ENCODE measurements at regions of chr16 and their contacts with region 1.

Region 1: DNA sequence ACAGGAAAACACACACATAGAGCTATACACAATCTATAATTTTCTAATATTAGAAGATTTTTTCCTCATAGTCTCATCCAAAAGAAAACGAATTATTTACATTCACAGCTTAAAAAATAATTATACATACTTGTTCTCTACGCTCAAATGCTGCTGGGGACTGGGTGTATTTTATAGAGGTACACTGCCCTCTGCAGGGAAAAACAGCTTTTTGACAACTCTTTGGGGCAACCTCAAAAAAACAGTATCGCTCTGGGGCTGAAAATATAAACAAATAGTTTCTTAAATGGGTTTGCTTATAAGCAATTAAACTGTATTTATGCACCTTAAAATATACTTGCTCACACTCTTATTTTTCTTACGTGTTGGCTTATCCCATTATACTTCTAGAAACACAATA is 261.8 kb upstream of the PSMD7 start:
- DNase-seq: no peak
- H3K4me3 ChIP-seq: no peak overlapping the region
- H3K27ac ChIP-seq: no peak overlapping the region
- H3K4me1 ChIP-seq: peaks cover 12 to 15% (median 14%) of the 10 kb centered on the region in 4 experiments; a peak in 6 of 7 replicates
- H3K27me3 ChIP-seq: no peaks in the 10 kb centered on the region
- CTCF ChIP-seq: peak in 2 of 3 experiments; percentile 48 to 56; a peak in 3 of 4 replicates
- EP300 ChIP-seq: no peak
- POLR2A ChIP-seq: no peak
- RAD21 ChIP-seq: peak; percentile 74 to 76

Region 2: DNA sequence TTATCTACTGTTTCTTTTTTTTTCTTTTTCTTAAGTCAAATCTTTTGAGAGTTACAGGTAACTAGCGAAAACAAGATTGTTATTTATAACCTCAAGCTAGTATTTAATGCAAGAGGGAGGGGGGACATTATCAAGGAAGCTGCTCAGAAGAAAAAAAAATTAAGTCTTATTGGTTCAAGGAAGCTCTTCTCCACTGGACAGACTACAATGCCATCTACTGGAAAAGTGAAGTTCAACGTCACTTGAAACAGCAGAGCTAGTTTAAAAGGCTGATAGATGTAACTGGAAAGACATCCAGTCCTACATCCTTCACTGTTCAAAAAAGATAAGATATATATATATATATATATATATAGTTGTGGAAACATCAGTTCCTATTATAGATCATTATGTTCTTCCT is 156.3 kb before region 1 on chr16:
- CTCF ChIA-PET with region 1: interaction called, 12 read pairs
- POLR2A ChIA-PET with region 1: no interaction called
- DNase-seq: no peak
- H3K4me3 ChIP-seq: no peak overlapping the region
- H3K27ac ChIP-seq: no peak overlapping the region
- H3K4me1 ChIP-seq: peaks cover 0 to 4% (median 1%) of the 10 kb centered on the region in 4 experiments; a peak in 3 of 7 replicates
- H3K27me3 ChIP-seq: no peaks in the 10 kb centered on the region
- CTCF ChIP-seq: peak in 2 of 3 experiments; percentile 31 to 56; a peak in 2 of 4 replicates
- EP300 ChIP-seq: no peak
- POLR2A ChIP-seq: no peak
- RAD21 ChIP-seq: peak; percentile 82 to 87

Region 3: GRCh38 chr16:73996624-73997339 is 38.1 kb before region 1 on chr16:
- CTCF ChIA-PET with region 1: interaction called, 11 read pairs
- POLR2A ChIA-PET with region 1: no interaction called
- DNase-seq: no peak
- H3K4me3 ChIP-seq: no peak overlapping the region
- H3K27ac ChIP-seq: no peak overlapping the region
- H3K4me1 ChIP-seq: no peaks in the 10 kb centered on the region
- H3K27me3 ChIP-seq: no peaks in the 10 kb centered on the region
- CTCF ChIP-seq: no peak
- EP300 ChIP-seq: no peak
- POLR2A ChIP-seq: no peak
- RAD21 ChIP-seq: no peak

Region 4: DNA sequence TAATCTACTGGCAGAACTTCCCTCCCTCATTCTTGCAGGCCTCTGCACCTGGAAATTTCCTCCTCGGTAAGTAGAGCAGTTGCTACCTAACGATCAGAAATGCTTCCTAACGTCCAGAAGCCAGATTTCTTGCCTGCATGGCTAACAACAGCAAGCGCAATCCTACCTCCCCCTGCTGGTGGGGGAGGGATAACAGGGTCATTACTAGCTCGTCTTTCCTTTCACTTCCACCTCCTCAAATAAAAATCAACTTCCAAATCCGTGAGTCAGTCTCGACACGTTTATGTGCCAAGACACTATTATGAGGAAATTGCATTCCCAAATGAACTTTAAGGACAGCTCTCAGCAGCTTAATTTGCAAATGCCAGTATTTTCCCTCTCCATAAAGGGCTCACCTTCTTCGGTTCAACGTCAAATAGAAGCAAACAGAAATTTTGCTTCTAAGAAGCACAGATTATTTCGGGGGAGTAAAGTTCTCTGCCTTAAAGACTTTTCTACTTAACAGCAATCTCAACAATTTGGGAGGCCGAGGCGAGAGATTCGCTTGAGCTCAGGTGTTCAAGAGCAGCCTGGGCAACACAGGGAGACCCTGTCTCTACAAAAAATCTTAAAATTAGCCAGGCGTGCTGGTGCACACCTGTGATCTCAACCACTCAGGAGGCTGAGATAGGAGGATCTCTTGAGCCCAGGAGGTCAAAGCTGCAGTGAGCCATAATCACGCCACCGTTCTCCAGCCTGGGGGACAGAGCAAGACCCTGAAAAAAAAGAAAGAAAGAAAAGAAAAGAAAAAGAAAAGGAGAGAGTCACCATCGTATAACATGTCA is 73.1 kb after region 1 on chr16:
- CTCF ChIA-PET with region 1: interaction called, 27 read pairs
- POLR2A ChIA-PET with region 1: no interaction called
- DNase-seq: peak; percentile 69 to 85
- H3K4me3 ChIP-seq: no peak overlapping the region
- H3K27ac ChIP-seq: no peak overlapping the region
- H3K4me1 ChIP-seq: peaks cover 0 to 5% (median 0%) of the 10 kb centered on the region in 4 experiments; a peak in 3 of 7 replicates
- H3K27me3 ChIP-seq: no peaks in the 10 kb centered on the region
- CTCF ChIP-seq: peak; percentile 78 to 98 (median 90)
- EP300 ChIP-seq: no peak
- POLR2A ChIP-seq: no peak
- RAD21 ChIP-seq: peak; percentile 86 to 88